Activated CD8-positive, alpha-beta memory T cell treated with anti-CD3 and anti-CD28 coated beads, Interleukin-2, amount 10 ng/mL, durations not matched to agents 7 days and 5 days (primary cell): ENCODE measurements at regions of chr12 and their contacts with region 1.

Region 1: DNA sequence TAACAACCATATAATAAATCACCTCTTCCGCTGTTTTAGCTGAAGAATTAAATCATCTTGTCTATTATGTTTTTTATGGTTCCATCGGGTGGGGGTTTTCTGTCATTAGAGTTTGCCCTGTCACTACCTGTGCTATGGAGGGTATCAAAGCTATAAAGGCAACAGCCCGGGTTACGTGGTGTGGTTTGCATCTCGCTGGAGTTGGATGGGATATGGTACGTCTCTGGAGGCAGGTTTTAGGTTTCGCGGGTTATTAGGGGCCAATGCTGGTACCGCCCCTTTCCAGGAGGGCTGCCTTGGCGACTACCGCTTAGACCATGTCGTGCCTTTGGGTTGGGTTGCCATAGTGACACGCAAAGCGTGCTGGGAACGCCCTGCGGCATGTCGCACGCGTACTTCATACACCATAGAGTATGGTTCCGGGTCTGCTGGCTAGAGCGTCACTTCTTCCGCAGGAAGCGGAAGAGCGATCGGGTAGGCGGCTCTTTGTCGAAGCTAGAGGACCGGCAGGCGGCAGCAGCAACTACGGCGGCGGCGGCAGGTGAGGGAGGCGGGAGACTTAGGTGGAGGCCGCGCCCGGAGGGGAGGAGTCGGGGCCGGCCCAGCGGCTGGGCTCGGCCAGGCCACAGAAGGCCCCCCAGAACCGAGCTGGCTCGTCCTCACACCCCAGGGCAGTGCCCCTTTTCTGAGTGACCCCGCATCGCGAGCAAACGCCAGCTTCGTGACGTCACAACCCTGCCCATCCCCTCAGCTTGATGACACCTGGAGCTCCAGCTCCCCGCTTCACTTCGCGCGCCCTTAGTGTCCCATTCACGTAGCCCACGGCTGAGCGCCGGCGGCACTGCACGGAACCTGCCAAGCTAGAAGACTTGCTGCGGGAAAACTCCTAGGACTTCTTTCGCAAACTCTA is at the start of gene ZC3H10:
- DNase-seq: peak; percentile 100
- ATAC-seq: peak; percentile 79
- H3K4me3 Mint-ChIP-seq: peak within 1 kb of the TSS; percentile 98
- H3K27ac Mint-ChIP-seq: peak within 1 kb of the TSS; percentile 98
- H3K4me1 Mint-ChIP-seq: peaks cover 33% of the 10 kb centered on the region
- H3K27me3 Mint-ChIP-seq: no peaks in the 10 kb centered on the region
- total RNA-seq, gene ZC3H10: 10.3 to 11.7 TPM

Region 2: DNA sequence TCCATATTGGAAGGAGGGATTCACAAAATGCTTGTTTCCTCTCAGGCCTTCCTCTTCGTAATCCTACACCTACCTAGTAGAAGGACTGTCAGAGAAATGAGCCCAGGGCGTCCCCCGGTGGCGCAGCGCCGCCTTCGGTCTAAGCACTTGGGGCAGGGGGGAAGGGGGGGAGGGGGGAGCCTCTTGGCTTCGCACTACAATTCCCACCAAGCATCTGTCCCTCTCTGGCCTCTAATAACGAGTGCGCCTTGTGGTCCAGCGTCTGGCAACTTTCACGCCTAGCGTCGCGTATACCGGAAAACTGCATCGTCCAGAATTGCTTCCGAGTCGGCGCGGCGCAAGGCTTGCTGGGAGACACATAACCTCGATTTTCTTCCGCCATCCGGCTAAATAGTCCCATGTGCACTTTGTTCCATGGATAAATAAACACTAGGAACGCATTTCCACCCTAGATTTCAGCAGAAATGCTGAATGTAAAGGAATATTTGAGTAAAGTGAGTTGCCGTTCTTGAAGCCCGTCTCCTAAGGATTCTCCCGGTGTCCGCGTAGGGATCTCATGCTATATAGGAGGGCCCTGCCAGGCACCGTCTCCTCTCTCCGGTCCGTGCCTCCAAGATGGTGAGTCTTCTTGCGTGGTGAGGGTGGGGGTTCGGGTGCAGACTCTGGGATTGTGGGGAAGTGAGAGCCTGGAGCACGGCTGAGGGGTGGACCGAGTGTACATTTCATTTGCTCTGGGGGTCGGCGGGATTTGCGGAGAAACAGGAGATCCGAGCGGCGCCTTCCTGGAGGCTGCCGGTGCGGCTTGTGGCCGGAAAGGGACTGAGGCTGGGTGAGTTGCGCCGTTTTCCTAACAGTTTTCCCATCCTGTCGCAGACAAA is 76.2 kb before region 1 on chr12 and contains the start of gene RPS26:
- CTCF ChIA-PET with region 1: interaction called, 16 read pairs
- DNase-seq: peak; percentile 97
- ATAC-seq: peak; percentile 91
- H3K4me3 Mint-ChIP-seq: peak within 1 kb of the TSS; percentile 93
- H3K27ac Mint-ChIP-seq: peak within 1 kb of the TSS; percentile 97
- H3K4me1 Mint-ChIP-seq: peaks cover 53% of the 10 kb centered on the region
- H3K27me3 Mint-ChIP-seq: no peaks in the 10 kb centered on the region
- total RNA-seq, gene RPS26: 27.9 to 42.2 TPM

Region 3: GRCh38 chr12:56084958-56085543 is 33.0 kb before region 1 on chr12:
- CTCF ChIA-PET with region 1: interaction called, 13 read pairs
- DNase-seq: peak; percentile 67
- ATAC-seq: peak; percentile 64
- H3K4me3 Mint-ChIP-seq: no peak overlapping the region
- H3K27ac Mint-ChIP-seq: no peak overlapping the region
- H3K4me1 Mint-ChIP-seq: peaks cover 8% of the 10 kb centered on the region
- H3K27me3 Mint-ChIP-seq: peaks cover 25% of the 10 kb centered on the region

Region 4: DNA sequence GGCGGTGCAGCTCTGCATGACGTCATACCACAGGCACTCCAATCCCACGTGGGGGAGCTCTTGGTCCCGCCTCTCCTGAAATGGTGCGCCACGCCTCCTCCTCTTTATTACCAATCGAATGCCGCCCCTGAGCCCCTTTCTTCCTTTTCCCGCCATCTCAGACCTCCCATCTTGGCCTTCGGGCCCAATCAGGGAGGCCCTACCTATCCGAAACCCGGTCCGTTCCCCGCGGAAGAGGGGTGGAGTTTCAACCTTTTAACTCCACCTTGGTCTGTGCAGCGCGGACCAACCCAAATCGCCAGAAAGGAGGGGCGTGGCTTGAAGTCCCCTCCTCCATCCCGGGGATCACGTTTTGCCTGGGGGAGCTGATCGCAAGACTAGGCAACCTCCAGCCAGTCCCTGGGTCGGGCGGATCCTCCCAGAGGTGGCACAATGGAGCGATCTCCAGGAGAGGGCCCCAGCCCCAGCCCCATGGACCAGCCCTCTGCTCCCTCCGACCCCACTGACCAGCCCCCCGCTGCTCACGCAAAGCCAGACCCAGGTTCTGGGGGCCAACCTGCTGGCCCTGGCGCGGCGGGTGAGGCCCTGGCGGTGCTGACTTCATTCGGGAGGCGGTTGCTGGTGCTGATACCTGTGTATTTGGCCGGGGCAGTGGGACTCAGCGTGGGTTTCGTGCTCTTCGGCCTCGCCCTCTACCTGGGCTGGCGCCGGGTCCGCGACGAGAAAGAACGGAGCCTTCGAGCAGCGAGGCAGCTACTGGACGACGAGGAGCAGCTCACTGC is 10.0 kb after region 1 on chr12 and contains the start of gene ESYT1:
- CTCF ChIA-PET with region 1: interaction called, 35 read pairs
- DNase-seq: peak; percentile 100
- ATAC-seq: peak; percentile 91
- H3K4me3 Mint-ChIP-seq: peak within 1 kb of the TSS; percentile 98
- H3K27ac Mint-ChIP-seq: peak within 1 kb of the TSS; percentile 93
- H3K4me1 Mint-ChIP-seq: peaks cover 66% of the 10 kb centered on the region
- H3K27me3 Mint-ChIP-seq: no peaks in the 10 kb centered on the region
- total RNA-seq, gene ESYT1: 225 to 241 TPM

Region 5: DNA sequence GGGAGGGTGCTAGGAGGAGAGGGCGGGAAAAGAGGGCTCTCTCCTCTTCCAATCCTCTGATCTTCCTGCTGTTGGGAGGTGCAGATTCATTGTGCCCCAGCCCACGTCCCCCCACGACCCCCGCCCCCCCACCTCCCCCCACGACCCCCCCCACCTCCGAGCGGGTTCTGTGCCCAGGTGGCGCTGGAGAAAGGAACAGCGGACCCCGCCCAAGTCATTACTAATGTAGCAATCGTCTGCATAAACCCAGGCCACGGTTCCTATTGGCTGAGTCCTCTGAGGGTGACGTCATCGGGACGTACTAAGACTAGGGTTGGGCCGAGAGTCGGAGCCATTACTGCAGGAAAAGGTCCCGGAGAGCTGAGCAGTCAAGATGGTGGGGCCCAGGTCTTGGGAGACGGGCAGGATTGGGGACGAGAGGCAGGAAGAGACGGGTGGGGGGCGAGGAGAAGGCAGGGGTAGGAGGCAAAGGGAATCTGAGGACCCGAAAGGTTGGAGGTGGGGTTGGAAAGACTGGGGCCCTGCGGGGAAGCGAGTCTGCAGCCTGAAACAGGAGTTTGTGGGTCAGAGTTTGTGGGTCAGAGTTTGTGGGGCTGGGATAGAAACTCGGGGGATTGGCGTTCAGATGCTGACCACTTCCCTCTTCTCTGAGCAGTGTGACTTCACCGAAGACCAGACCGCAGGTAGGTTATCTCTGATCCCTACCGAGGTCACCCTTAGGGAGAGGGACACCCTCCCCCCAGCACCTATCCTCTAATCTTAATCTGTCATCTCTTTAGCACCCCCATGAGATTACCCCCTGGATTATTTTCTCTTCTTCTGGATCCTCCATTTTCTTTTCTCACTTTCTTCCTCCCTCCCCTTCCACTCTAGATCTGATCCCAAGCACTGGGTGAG is 40.2 kb after region 1 on chr12 and contains the start of gene MYL6:
- CTCF ChIA-PET with region 1: interaction called, 29 read pairs
- DNase-seq: peak; percentile 98
- ATAC-seq: peak; percentile 85
- H3K4me3 Mint-ChIP-seq: peak within 1 kb of the TSS; percentile 94
- H3K27ac Mint-ChIP-seq: peak within 1 kb of the TSS; percentile 96
- H3K4me1 Mint-ChIP-seq: peaks cover 51% of the 10 kb centered on the region
- H3K27me3 Mint-ChIP-seq: no peaks in the 10 kb centered on the region
- total RNA-seq, gene MYL6: 1,307 to 1,412 TPM

Region 6: DNA sequence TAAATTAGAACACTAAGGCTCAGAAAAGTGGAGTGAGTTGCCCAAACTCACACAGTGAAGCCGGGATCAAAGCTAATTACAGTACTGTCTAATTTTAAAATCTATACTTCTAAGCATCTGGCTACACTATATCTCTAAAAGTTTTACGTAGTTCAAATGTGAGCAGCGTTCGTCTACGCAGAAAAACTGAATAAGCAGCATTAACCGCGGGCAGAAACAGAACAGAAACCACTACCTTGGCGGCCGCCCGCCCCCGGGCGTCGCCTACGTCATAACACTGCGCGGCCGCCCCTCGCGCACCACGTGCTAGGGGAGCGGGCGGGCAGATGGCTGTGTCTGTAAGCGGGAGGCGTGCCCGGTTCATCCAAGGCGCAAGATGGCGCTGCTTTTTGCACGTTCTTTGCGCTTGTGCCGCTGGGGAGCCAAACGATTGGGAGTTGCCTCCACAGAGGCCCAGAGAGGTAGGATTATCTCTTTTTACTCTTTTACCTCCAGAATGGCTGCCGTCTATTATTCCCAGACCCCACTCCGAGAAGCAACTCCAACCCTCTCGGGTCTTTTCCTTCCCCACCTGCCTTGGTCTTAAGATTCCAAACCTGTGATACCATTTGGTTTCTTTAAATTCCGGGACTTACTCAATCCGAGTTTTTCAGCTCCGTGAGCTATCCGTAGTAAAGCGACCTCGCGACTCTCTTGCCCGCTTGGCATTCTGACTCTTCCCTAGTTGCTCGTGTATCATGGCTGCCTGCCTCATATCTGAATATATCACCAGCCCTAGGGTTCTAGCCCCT is 350.4 kb after region 1 on chr12 and contains the start of gene SPRYD4:
- CTCF ChIA-PET with region 1: interaction called, 11 read pairs
- DNase-seq: peak; percentile 95
- ATAC-seq: peak; percentile 96
- H3K4me3 Mint-ChIP-seq: peak within 1 kb of the TSS; percentile 97
- H3K27ac Mint-ChIP-seq: peak within 1 kb of the TSS; percentile 95
- H3K4me1 Mint-ChIP-seq: peaks cover 29% of the 10 kb centered on the region
- H3K27me3 Mint-ChIP-seq: no peaks in the 10 kb centered on the region
- total RNA-seq, gene SPRYD4: 3.4 to 3.7 TPM